ENCODE measurements at regions of chr20 and their contacts with region 1.

Region 1: DNA sequence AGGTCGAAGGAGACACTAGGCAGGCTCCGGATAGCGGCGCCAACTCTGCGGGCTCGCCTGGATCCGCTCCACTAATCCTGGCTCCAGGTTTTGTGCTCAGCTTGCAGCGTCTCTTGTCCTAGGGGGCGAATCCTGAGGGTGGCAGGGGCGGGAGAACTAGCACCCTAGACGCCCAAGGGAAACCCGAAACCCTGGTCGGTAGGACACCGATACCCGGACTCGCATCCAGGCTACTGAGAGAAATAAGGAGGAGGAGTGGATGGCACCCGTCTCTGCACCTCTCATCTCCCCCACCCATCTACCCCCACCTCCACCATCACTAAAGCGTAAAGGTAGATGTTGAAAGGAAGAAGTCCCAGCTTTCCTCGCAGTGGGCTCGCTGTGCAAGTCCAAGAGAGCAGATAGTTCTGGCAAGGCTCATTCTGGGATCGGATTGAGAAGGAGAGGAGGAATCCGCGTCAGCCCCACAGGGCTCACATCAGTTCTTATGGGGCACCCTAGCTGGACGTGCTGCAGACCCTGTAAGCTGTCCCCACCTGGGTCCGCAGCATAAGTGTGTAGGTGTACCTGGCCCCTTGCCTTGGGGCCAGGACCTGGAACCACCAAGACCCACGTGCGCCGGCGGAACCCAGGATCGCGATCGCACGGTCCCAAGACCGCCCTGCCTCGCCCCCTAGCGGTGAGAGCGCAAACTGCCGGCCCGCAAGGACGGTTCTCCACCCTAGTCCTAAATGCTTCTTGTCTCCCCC is 6.9 kb downstream of the SLC32A1 start:
- DNase-seq: peak; percentile 93
- H3K4me3 Mint-ChIP-seq: peak overlapping the region; percentile 70
- H3K27ac Mint-ChIP-seq: peak overlapping the region; percentile 73
- H3K4me1 Mint-ChIP-seq: peaks cover 35% of the 10 kb centered on the region
- H3K27me3 Mint-ChIP-seq: peaks cover 88% of the 10 kb centered on the region

Region 2: GRCh38 chr20:38633577-38634093 is 97.5 kb before region 1 on chr20:
- intact Hi-C with region 1: loop called (anchors 5 kb)
- DNase-seq: peak; percentile 88
- H3K4me3 Mint-ChIP-seq: no peak overlapping the region
- H3K27ac Mint-ChIP-seq: no peak overlapping the region
- H3K4me1 Mint-ChIP-seq: peaks cover 8% of the 10 kb centered on the region
- H3K27me3 Mint-ChIP-seq: peaks cover 11% of the 10 kb centered on the region

Region 3: GRCh38 chr20:38748097-38748860 is 17.1 kb after region 1 on chr20 and contains the start of gene ACTR5:
- intact Hi-C with region 1: loop called (anchors 1 kb)
- DNase-seq: peak; percentile 99
- H3K4me3 Mint-ChIP-seq: peak within 1 kb of the TSS; percentile 91
- H3K27ac Mint-ChIP-seq: peak within 1 kb of the TSS; percentile 93
- H3K4me1 Mint-ChIP-seq: peaks cover 21% of the 10 kb centered on the region
- H3K27me3 Mint-ChIP-seq: peaks cover 9% of the 10 kb centered on the region
- total RNA-seq, gene ACTR5: 15.2 and 15.8 TPM in 2 replicates

Region 4: GRCh38 chr20:38790200-38791053 is 59.3 kb after region 1 on chr20:
- intact Hi-C with region 1: loop called (anchors 5 kb)
- DNase-seq: peak; percentile 84
- H3K4me3 Mint-ChIP-seq: no peak overlapping the region
- H3K27ac Mint-ChIP-seq: no peak overlapping the region
- H3K4me1 Mint-ChIP-seq: peaks cover 13% of the 10 kb centered on the region
- H3K27me3 Mint-ChIP-seq: no peaks in the 10 kb centered on the region